ENCODE measurements at regions of chr2 and their contacts with region 1.

Region 1: GRCh38 chr2:20051532-20052228 is at the start of gene LAPTM4A:
- DNase-seq: peak; percentile 99
- ATAC-seq: peak; percentile 97 to 99 (median 98)
- H3K4me3 ChIP-seq: peak within 1 kb of the TSS; percentile 60 to 91 (median 82)
- H3K27ac ChIP-seq: peak within 1 kb of the TSS; percentile 94 to 99 (median 98)
- H3K4me1 ChIP-seq: peaks cover 0 to 39% (median 30%) of the 10 kb centered on the region in 12 donors
- H3K27me3 ChIP-seq: no peaks in the 10 kb centered on the region
- CTCF ChIP-seq: peak in 3 of 12 donors; percentile 15 to 26 (median 24)
- POLR2A ChIP-seq: peak in 1 of 2 donors; percentile 83
- total RNA-seq, gene LAPTM4A: 159 to 241 (median 177) TPM

Region 2: GRCh38 chr2:19901442-19902215 is 150.1 kb before region 1 on chr2 and contains the start of gene TTC32:
- intact Hi-C with region 1: loop called in 1 of 10 experiments (anchors 5 kb)
- DNase-seq: peak; percentile 94 to 96 (median 95)
- ATAC-seq: peak; percentile 96 to 98 (median 98)
- H3K4me3 ChIP-seq: peak within 1 kb of the TSS; percentile 75 to 97 (median 84)
- H3K27ac ChIP-seq: peak within 1 kb of the TSS; percentile 91 to 98 (median 96)
- H3K4me1 ChIP-seq: peaks cover 0 to 49% (median 34%) of the 10 kb centered on the region in 12 donors
- H3K27me3 ChIP-seq: no peaks in the 10 kb centered on the region
- CTCF ChIP-seq: peak in 2 of 12 donors; percentile 14 to 16
- POLR2A ChIP-seq: peak in 1 of 2 donors; percentile 67
- total RNA-seq, gene TTC32: 2.6 to 9.8 (median 6.3) TPM

Region 3: GRCh38 chr2:20015472-20016083 is 36.1 kb before region 1 on chr2:
- intact Hi-C with region 1: loop called in 1 of 10 experiments (anchors 5 kb)
- DNase-seq: no peak
- ATAC-seq: peak in 3 of 4 donors; percentile 40 to 56 (median 55)
- H3K4me3 ChIP-seq: no peak overlapping the region
- H3K27ac ChIP-seq: no peak overlapping the region
- H3K4me1 ChIP-seq: peaks cover 0 to 16% (median 9%) of the 10 kb centered on the region in 12 donors
- H3K27me3 ChIP-seq: peaks cover 0 to 34% (median 3%) of the 10 kb centered on the region in 9 donors
- CTCF ChIP-seq: peak; percentile 44 to 72 (median 67)
- POLR2A ChIP-seq: no peak

Region 4: DNA sequence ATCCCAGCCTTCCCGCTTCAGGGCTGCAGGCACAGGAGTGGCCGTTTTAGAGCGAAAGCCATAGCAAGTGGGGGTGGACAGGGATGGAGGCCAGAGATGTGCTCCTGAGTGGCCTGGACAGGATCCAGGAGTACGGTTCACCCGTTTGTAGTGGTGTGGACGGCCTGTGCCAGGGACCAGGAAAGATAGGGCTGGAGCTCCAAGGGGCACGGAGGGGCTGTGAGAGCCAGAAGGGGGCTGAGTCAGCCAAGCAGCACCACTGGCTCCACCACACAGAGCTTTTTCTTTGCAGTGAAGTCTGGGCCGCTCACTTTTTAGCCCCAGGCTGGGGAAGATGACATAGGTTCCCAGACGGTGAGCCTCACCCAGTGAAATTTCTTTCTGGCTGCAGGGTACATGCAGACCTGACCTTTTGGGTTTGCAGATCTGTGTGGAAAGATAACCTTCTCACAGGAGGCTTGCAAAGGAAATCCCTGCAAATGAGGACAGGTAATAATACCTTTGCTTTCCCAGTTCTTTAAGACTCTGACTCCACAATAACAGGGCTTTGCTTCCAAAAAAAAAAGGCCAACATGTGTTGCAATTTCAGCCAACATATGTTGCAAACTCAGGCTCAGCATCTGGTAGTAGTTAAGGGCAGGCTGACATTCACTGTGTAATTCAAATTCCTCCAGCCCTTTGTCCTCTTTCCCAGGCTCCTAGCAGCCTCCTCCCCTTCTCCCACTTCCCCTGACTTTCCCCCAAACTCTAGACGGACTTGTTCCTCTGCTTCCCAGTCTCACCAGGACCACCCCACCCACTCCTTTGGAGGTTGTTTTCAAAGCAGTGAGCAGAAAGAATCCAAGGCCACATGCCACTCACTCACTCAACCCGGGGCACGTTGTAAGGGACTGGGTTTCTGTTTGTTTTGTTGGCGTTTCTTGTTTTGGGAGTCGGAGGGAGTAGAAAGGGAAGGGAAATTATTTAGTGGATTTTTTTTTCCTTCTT is 20.0 kb after region 1 on chr2:
- intact Hi-C with region 1: loop called in 1 of 10 experiments (anchors 2 kb)
- DNase-seq: peak; percentile 67 to 90 (median 80)
- ATAC-seq: peak; percentile 80 to 92 (median 88)
- H3K4me3 ChIP-seq: peak overlapping the region in 4 of 12 donors; percentile 14 to 29 (median 18)
- H3K27ac ChIP-seq: peak overlapping the region; percentile 69 to 92 (median 84)
- H3K4me1 ChIP-seq: peaks cover 0 to 51% (median 26%) of the 10 kb centered on the region in 12 donors
- H3K27me3 ChIP-seq: no peaks in the 10 kb centered on the region
- CTCF ChIP-seq: no peak
- POLR2A ChIP-seq: no peak

Region 5: DNA sequence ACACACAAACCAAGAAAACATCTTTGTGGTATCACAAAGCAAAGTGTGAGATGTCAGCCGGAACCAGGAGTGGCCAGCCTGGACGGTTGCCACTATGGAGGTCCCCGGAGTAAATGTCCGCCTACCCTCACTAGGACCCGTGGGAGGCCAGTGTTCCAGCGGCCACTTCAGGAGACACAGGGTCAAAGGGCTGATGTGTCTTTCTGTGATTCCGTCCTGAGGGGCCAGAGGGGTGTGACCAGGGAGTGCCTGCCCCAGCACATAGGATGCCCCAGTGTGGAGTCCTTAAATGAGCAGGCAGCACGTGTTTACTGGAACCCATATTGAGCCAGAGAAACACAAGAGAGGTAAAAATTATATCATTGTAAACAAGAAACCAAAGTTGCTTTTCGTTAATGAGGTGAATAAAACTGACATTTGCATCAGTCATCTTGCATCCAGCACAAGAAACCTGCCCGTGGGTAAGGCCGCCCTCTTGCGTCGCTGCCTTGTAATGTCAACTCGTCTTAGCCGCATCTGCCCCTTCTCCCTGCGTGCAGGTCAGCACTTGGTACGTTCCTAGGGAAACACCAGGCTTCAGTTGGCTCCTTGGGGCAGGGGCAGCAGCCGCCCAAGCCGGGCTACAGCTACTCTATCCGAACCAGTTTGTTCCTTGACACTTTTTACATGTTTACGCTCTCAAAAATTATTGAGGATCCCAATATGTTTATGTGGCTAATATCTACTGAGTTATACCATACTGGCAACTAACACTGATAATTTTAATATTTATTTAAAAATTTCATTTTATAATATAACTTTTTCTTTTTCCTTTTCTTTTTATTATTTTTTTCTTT is 46.4 kb after region 1 on chr2:
- intact Hi-C with region 1: loop called in 3 of 10 experiments (anchors 2 to 5 kb)
- DNase-seq: peak; percentile 70 to 90 (median 80)
- ATAC-seq: peak in 3 of 4 donors; percentile 85 to 88 (median 86)
- H3K4me3 ChIP-seq: no peak overlapping the region
- H3K27ac ChIP-seq: no peak overlapping the region
- H3K4me1 ChIP-seq: peaks cover 0 to 8% (median 2%) of the 10 kb centered on the region in 12 donors
- H3K27me3 ChIP-seq: no peaks in the 10 kb centered on the region
- CTCF ChIP-seq: peak; percentile 75 to 94 (median 90)
- POLR2A ChIP-seq: no peak

Region 6: DNA sequence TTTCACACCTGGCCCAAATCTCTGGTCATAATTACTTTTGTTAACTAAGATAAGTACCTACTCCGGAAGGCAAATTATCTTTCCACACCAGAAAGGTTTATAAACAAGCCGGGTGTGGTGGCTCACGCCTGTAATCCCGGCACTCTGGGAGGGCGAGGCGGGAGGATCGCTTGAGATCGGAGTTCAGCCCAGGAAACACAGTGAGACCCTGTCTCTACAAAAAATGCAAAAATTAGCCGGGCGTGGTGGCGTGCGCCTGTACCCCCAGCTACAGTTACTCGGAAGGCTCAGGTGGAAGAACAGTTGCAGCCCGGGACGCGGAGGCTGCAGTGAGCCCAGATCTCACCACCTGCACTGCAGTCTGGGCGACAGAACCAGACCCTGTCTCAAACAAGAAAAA is 296.9 kb after region 1 on chr2:
- intact Hi-C with region 1: loop called in 1 of 10 experiments (anchors 5 kb)
- DNase-seq: no peak
- ATAC-seq: no peak
- H3K4me3 ChIP-seq: peak overlapping the region in 7 of 12 donors; percentile 80 to 97 (median 90)
- H3K27ac ChIP-seq: no peak overlapping the region
- H3K4me1 ChIP-seq: peaks cover 5 to 70% (median 46%) of the 10 kb centered on the region in 12 donors
- H3K27me3 ChIP-seq: no peaks in the 10 kb centered on the region
- CTCF ChIP-seq: no peak
- POLR2A ChIP-seq: no peak

Measured in heart left ventricle (tissue), 16 donors.